SK-N-SH (cell line): ENCODE measurements at regions of chr1 and their contacts with region 1.

Region 1: GRCh38 chr1:25895365-25895993 is 10.7 kb downstream of the STMN1 start:
- DNase-seq: peak; percentile 95
- H3K4me3 ChIP-seq: no peak overlapping the region; a peak in 1 of 4 replicates
- H3K27ac ChIP-seq: peak overlapping the region; percentile 64 to 69
- H3K4me1 ChIP-seq: peaks cover 15 to 33% of the 10 kb centered on the region in 2 experiments; a peak in 3 of 4 replicates
- H3K27me3 ChIP-seq: no peaks in the 10 kb centered on the region
- CTCF ChIP-seq: peak; percentile 98
- EP300 ChIP-seq: peak in 1 of 2 experiments; percentile 81; a peak in 2 of 4 replicates
- RAD21 ChIP-seq: peak; percentile 99

Region 2: DNA sequence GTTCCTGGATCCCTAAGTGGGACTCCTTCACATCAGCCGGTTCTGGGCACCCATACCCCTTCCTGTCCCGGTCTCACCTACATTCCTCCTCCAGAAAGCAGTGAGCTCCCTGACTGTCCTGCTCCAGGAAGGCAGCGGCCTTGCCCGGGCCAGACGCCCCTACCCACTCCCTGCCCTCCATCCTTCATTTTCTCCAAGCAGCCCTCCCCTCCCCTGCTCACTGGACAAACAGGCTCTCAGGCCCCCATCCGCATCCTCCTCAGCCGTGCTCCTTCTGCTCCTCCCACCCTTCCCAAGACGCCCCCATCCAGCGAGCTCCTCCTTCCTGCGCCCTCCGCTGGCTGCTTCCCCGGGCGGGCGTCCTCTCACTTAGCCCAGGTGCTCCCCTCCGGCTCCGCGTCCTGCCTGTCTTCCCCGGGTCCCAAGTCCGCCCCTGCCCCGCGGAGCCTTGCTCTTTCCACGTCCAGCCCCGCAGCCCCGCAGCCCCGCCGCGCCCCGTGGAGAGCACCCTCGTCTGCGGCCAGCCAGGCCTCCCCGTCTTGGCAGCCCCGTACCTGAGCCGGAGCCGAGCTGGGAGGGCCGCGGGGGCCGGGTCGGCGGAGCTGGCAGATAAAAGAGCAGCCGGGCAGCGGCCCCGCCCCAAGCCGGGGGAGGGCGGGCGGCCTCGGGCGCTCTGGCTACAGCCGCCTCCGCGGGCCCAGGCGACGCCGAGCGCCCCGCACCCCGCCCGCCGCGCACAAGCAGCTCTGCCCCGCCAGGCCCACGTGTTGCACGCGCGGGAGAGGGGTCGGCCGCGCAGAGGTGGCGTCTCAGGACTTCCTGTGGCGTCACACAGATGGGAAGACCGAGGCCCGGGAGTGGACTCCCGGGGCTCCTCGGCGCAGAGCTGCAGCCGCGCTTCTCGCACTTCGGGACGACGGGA is 20.3 kb before region 1 on chr1 and contains the start of gene PAQR7:
- CTCF ChIA-PET with region 1: interaction called, 32 read pairs
- POLR2A ChIA-PET with region 1: interaction called, 3 read pairs
- DNase-seq: peak; percentile 92
- H3K4me3 ChIP-seq: peak within 1 kb of the TSS; percentile 62 to 66
- H3K27ac ChIP-seq: peak within 1 kb of the TSS; percentile 8 to 48; a peak in 2 of 4 replicates
- H3K4me1 ChIP-seq: peaks cover 0 to 23% of the 10 kb centered on the region in 2 experiments; a peak in 1 of 4 replicates
- H3K27me3 ChIP-seq: no peaks in the 10 kb centered on the region
- CTCF ChIP-seq: 0 out of 2 replicates have a peak, but pooled peaks have one; percentile 11
- EP300 ChIP-seq: no peak
- RAD21 ChIP-seq: no peak
- polyA plus RNA-seq, gene PAQR7: 5.6 and 7.0 TPM in 2 replicates

Region 3: GRCh38 chr1:25944986-25945385 is 49.5 kb after region 1 on chr1:
- CTCF ChIA-PET with region 1: interaction called, 10 read pairs
- POLR2A ChIA-PET with region 1: no interaction called
- DNase-seq: no peak
- H3K4me3 ChIP-seq: no peak overlapping the region
- H3K27ac ChIP-seq: no peak overlapping the region
- H3K4me1 ChIP-seq: no peaks in the 10 kb centered on the region; a peak in 1 of 4 replicates
- H3K27me3 ChIP-seq: no peaks in the 10 kb centered on the region
- CTCF ChIP-seq: no peak
- EP300 ChIP-seq: no peak
- RAD21 ChIP-seq: no peak

Region 4: GRCh38 chr1:25958465-25958864 is 63.0 kb after region 1 on chr1:
- CTCF ChIA-PET with region 1: interaction called, 15 read pairs
- POLR2A ChIA-PET with region 1: no interaction called
- DNase-seq: no peak
- H3K4me3 ChIP-seq: no peak overlapping the region
- H3K27ac ChIP-seq: peak overlapping the region in 1 of 2 experiments; percentile 50; a peak in 2 of 4 replicates
- H3K4me1 ChIP-seq: peaks cover 0 to 8% of the 10 kb centered on the region in 2 experiments; a peak in 1 of 4 replicates
- H3K27me3 ChIP-seq: no peaks in the 10 kb centered on the region
- CTCF ChIP-seq: no peak
- EP300 ChIP-seq: no peak
- RAD21 ChIP-seq: no peak

Region 5: GRCh38 chr1:25997828-25998761 is 102.6 kb after region 1 on chr1 and contains the start of gene PAFAH2:
- CTCF ChIA-PET with region 1: interaction called, 344 read pairs
- POLR2A ChIA-PET with region 1: interaction called, 27 read pairs
- DNase-seq: peak; percentile 91
- H3K4me3 ChIP-seq: peak within 1 kb of the TSS; percentile 57 to 84
- H3K27ac ChIP-seq: peak within 1 kb of the TSS; percentile 60 to 64; a peak in 3 of 4 replicates
- H3K4me1 ChIP-seq: peaks cover 5 to 21% of the 10 kb centered on the region in 2 experiments; a peak in 3 of 4 replicates
- H3K27me3 ChIP-seq: no peaks in the 10 kb centered on the region
- CTCF ChIP-seq: peak; percentile 95
- EP300 ChIP-seq: peak in 1 of 2 experiments; percentile 49; a peak in 1 of 4 replicates
- RAD21 ChIP-seq: peak; percentile 99
- polyA plus RNA-seq, gene PAFAH2: 10.8 and 16.0 TPM in 2 replicates

Region 6: GRCh38 chr1:26021647-26022403 is 126.3 kb after region 1 on chr1 and contains the start of gene EXTL1:
- CTCF ChIA-PET with region 1: interaction called, 11 read pairs
- POLR2A ChIA-PET with region 1: interaction called, 3 read pairs
- DNase-seq: peak; percentile 96
- H3K4me3 ChIP-seq: peak within 1 kb of the TSS; percentile 48 to 59
- H3K27ac ChIP-seq: peak within 1 kb of the TSS in 1 of 2 experiments; percentile 95; a peak in 2 of 4 replicates
- H3K4me1 ChIP-seq: peaks cover 2 to 43% of the 10 kb centered on the region in 2 experiments; a peak in 2 of 4 replicates
- H3K27me3 ChIP-seq: no peaks in the 10 kb centered on the region
- CTCF ChIP-seq: no peak
- EP300 ChIP-seq: peak in 1 of 2 experiments; percentile 52; a peak in 1 of 4 replicates
- RAD21 ChIP-seq: 0 out of 2 replicates have a peak, but pooled peaks have one; percentile 7
- polyA plus RNA-seq, gene EXTL1: 0.58 and 1.1 TPM in 2 replicates

Region 7: GRCh38 chr1:26148887-26149286 is 253.4 kb after region 1 on chr1:
- CTCF ChIA-PET with region 1: no interaction called
- POLR2A ChIA-PET with region 1: no interaction called
- DNase-seq: no peak
- H3K4me3 ChIP-seq: no peak overlapping the region
- H3K27ac ChIP-seq: no peak overlapping the region
- H3K4me1 ChIP-seq: no peaks in the 10 kb centered on the region
- H3K27me3 ChIP-seq: peaks cover 14% of the 10 kb centered on the region; the same call in 1 of the 2 replicates
- CTCF ChIP-seq: no peak
- EP300 ChIP-seq: no peak
- RAD21 ChIP-seq: no peak

Region 8: GRCh38 chr1:26378088-26378878 is 482.8 kb after region 1 on chr1:
- CTCF ChIA-PET with region 1: no interaction called
- POLR2A ChIA-PET with region 1: no interaction called
- DNase-seq: no peak
- H3K4me3 ChIP-seq: no peak overlapping the region
- H3K27ac ChIP-seq: peak overlapping the region; percentile 11 to 86; a peak in 3 of 4 replicates
- H3K4me1 ChIP-seq: peaks cover 0 to 6% of the 10 kb centered on the region in 2 experiments; a peak in 2 of 4 replicates
- H3K27me3 ChIP-seq: no peaks in the 10 kb centered on the region
- CTCF ChIP-seq: no peak
- EP300 ChIP-seq: peak in 1 of 2 experiments; percentile 29; a peak in 2 of 4 replicates
- RAD21 ChIP-seq: no peak